Activated CD8-positive, alpha-beta memory T cell treated with anti-CD3 and anti-CD28 coated beads, Interleukin-2, amount 10 ng/mL, durations not matched to agents 7 days and 5 days (primary cell): ENCODE measurements at regions of chr1 and their contacts with region 1.

Region 1: DNA sequence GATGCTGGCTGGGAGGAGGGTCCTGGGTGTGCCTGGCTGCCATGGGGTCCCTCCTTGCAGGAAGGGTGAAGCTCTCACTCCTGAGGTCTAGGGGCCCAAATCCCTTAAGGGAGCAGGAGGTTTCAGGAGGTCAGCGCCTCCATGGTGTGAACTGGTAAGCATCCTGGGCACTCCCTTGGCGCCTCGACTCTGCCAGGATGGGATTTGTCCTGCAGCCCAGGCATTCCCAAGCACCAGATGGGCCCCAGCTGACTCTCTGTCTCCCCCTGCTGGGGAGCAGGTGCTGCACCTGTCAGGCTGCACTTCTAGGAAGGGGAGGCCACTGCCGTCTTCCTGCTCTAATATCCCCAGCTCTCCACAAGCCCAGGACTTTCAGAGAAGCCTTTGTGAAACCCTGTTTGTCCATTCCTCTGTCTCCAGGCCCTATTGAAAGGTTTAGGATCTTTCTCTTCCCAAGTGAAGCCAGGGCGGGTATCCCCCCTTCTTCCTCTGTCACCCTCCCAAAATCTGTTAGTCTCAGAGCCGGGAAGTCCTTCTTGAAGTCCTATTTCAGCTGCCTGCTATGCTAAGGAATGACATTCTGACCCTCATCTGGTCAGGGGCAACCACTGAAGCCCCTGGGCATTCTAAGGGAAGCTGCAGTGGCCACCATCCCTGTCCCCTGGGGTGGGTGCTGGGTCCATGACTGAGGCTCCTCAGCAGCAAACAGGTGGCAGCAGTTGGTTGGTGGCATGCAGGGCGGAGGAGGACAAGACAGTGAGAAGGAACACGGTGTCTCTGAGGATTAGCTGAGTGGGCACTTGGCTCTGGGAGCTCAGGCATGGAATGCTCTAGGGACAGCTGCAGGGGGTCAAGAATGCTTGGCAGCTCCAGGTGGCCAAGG is 3.3 kb downstream of the MYBPH start:
- DNase-seq: peak; percentile 62
- ATAC-seq: peak; percentile 77
- H3K4me3 Mint-ChIP-seq: no peak overlapping the region
- H3K27ac Mint-ChIP-seq: no peak overlapping the region
- H3K4me1 Mint-ChIP-seq: no peaks in the 10 kb centered on the region
- H3K27me3 Mint-ChIP-seq: peaks cover 3% of the 10 kb centered on the region

Region 2: DNA sequence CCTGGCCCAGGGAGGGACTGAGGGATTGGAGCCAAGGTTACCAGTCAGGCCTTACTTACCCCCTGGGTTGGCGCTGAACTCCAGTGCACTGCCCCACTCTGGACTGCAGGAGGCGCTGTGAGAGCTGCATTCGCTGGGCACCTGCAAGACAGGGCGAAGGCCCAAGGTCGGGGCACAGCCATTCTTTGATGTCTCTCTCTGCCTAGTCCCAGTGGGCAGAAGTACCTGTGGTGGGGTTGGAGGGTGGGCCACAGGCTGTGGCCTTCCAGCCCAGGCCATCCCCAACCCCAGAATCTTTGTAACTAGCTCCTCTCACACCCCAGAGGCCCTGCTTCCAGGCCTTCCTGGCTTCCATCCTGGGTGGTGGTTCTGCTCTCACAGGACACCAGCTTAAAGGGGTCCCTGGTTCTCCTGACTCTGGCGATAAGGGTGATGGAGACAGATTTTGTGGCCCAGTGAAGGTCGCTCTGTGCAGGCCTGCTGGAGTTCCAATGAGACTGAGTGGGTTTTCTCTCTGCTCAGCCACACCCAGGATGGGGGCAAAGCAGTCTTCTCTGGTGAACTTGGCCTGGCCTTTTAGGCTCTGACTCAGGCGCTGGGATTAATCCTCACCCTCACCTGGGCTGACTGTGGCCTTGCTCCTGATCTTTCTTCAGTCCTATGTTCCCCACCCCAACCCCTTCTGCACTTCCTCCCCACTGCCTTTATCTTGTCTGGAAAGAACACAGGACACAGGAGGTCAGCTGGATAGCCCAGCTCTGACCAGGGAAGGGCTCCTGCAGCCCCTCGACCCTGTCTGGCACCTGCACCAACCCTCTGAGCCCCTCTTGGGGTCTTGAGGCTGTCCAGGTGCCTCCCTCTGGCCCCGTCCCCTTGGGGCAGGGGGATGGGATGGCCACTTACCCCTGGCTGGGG is 87.5 kb before region 1 on chr1:
- CTCF ChIA-PET with region 1: interaction called, 10 read pairs
- DNase-seq: peak; percentile 52
- ATAC-seq: peak; percentile 47
- H3K4me3 Mint-ChIP-seq: no peak overlapping the region
- H3K27ac Mint-ChIP-seq: no peak overlapping the region
- H3K4me1 Mint-ChIP-seq: no peaks in the 10 kb centered on the region
- H3K27me3 Mint-ChIP-seq: peaks cover 7% of the 10 kb centered on the region

Region 3: DNA sequence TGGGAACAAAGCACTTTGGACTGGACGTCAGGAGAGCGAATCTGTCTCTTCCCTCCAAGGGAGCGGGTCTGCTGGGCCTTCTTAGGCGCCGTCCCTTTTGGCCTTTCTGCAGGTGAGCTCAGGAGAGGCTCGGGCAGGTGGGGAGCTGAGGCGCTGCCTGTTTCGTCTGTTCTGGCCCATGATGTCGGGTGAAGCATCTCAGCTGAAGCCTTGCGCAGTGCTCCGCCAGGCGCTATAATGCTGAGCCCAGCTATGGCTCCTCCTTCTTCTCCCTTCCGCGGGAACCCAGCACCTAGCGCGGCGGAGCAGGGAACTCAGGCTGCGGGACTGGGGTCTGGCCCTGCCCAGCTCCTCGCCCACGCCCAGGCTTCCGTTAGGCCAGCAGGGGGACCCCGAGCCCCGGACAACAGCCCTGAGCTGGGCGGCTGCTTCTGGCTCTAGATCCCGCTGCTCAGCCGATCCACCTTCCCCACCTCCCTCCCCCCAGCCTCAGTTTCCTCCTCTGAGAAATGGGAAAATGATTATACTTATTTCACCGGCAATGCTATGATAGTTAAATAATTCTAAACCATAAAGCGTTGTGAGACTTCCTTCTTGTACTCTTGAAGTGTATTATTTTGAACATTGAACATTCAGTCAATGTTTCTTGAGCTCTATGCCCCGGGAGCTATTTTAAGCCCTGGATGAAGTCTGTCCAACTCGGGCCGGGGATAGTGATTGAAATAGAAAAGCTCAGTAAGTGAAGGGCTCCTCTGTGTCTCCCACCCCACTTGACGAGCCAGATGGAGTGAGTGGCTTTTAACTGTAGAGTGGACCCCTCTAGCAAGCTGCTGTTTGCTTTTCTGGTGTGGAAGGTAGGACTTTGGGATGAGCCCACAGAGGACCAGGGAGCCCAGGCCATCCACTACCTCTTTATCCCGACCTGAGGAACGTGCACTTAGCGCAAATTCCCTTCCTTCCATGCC is 54.5 kb before region 1 on chr1:
- CTCF ChIA-PET with region 1: interaction called, 35 read pairs
- DNase-seq: peak; percentile 52
- ATAC-seq: peak; percentile 69
- H3K4me3 Mint-ChIP-seq: no peak overlapping the region
- H3K27ac Mint-ChIP-seq: no peak overlapping the region
- H3K4me1 Mint-ChIP-seq: peaks cover 14% of the 10 kb centered on the region
- H3K27me3 Mint-ChIP-seq: peaks cover 51% of the 10 kb centered on the region